Heart left ventricle (tissue), 16 donors: ENCODE measurements at regions of chr5 and their contacts with region 1.

Region 1: DNA sequence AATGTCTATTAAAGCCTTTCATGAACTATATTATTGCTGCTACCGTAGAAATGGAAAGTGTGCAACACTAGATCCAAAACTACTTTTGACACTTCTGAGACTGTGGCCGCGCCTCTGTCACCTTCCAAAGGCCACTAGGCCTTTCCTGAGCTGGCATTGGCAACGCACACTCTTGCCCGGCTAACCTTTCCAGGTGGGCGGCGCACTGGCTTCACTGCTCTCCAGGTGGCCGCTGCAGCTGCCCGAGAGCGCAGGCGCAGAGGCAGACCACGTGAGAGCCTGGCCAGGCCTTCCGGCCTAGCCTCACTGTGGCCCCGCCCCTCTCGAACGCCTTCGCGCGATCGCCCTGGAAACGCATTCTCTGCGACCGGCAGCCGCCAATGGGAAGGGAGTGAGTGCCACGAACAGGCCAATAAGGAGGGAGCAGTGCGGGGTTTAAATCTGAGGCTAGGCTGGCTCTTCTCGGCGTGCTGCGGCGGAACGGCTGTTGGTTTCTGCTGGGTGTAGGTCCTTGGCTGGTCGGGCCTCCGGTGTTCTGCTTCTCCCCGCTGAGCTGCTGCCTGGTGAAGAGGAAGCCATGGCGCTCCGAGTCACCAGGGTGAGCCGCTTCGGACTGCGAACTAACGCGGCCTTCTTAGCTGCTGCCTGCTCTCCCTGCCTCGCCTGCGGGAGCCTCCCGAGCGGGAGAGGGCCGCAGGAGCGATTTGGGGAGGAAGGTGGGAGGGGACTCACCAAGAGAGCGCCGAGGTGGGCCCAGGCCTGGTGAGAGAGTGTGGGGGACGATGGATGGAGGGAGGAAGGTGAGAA is at the start of gene CCNB1:
- DNase-seq: peak; percentile 97 to 99 (median 98)
- ATAC-seq: peak; percentile 100
- H3K4me3 ChIP-seq: peak within 1 kb of the TSS; percentile 58 to 87 (median 72)
- H3K27ac ChIP-seq: peak within 1 kb of the TSS in 8 of 12 donors; percentile 3 to 71 (median 48)
- H3K4me1 ChIP-seq: peaks cover 0 to 19% (median 11%) of the 10 kb centered on the region in 12 donors
- H3K27me3 ChIP-seq: no peaks in the 10 kb centered on the region
- CTCF ChIP-seq: peak in 3 of 12 donors; percentile 7 to 12 (median 8)
- POLR2A ChIP-seq: no peak
- total RNA-seq, gene CCNB1: 1.3 to 22.9 (median 3.8) TPM

Region 2: DNA sequence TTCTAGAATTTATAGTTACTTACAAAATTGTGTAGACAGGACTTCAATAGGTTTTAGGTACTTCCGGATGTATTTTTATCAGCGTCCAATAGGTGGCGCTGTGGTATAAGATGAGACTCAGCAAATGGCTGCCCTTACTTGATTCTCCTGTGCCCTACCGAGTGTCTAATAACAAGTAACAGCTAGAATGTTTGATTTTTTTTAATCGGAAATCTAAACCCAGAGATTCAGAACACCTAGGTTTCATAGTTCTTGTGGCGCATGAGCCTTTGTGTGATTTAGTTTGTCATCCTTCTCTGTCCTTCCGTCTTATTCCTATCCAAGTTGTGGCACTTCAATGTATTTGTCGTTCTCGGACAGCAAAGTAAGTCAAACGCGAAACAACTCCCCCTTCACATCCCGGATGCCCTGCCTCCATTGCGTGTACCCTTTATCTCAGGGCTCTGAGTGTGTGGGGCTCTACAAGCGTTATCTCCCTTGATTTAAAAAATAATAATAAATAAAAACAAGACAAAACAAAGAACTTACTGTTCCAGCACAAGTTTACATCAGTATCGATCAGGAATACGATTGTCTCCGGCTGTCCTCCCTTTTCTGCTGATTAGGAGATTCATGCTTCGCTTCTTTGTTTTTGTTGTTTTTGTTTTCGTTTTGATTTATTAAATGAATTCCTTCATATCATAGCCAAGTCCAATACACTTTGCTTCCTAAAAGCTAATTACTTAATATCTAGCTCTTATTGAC is 123.8 kb before region 1 on chr5:
- intact Hi-C with region 1: loop called in 2 of 10 experiments (anchors 5 to 10 kb)
- DNase-seq: peak in 4 of 5 donors; percentile 49 to 78 (median 66)
- ATAC-seq: peak; percentile 93 to 96 (median 95)
- H3K4me3 ChIP-seq: peak overlapping the region; percentile 24 to 67 (median 52)
- H3K27ac ChIP-seq: peak overlapping the region; percentile 51 to 84 (median 74)
- H3K4me1 ChIP-seq: peaks cover 0 to 6% (median 0%) of the 10 kb centered on the region in 12 donors
- H3K27me3 ChIP-seq: no peaks in the 10 kb centered on the region
- CTCF ChIP-seq: peak; percentile 81 to 96 (median 90)
- POLR2A ChIP-seq: no peak

Region 3: DNA sequence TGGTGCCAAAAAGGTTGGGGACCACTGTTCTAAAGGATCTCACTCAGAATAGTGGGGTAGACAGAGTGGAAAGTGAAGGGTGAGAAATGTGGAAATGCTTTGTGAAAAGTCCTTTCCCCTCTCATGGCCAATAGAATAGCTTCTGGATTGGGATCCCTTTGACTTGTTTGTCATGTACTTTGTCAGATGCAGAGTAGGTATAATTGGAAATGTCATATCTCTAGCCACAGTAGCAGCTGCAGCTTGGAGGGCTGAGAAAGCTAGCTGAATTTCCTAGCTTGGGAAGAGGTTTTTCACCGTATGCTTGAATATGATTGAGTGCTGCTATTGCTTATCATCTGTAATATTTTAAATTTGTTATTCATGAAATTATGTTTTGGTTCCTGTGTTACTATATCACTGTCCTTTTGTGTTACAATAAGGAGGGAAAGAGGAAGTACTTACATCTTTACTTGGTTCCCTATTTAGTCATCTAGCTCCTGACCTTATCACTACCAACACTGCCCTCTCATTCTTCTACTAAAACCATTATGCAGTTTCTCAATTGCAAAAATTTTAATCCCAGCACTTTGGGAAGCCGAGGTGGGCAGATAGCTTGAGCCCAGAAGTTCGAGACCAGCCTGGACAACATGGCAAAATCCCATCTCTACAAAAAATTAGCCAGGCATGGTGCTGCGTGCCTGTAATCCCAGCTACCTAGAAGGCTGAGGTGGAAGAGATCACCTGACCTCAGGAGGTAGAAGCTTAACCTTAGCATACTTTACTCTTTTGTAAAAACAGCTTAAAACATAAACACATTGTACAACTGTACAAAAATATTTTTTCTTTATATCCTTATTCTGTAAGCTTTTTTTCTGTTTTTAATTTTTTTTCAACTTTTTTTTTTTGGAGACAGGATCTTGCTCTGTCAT is 60.6 kb before region 1 on chr5:
- intact Hi-C with region 1: loop called in 1 of 10 experiments (anchors 10 kb)
- DNase-seq: no peak
- ATAC-seq: no peak
- H3K4me3 ChIP-seq: no peak overlapping the region
- H3K27ac ChIP-seq: no peak overlapping the region
- H3K4me1 ChIP-seq: no peaks in the 10 kb centered on the region
- H3K27me3 ChIP-seq: no peaks in the 10 kb centered on the region
- CTCF ChIP-seq: no peak
- POLR2A ChIP-seq: no peak

Region 4: DNA sequence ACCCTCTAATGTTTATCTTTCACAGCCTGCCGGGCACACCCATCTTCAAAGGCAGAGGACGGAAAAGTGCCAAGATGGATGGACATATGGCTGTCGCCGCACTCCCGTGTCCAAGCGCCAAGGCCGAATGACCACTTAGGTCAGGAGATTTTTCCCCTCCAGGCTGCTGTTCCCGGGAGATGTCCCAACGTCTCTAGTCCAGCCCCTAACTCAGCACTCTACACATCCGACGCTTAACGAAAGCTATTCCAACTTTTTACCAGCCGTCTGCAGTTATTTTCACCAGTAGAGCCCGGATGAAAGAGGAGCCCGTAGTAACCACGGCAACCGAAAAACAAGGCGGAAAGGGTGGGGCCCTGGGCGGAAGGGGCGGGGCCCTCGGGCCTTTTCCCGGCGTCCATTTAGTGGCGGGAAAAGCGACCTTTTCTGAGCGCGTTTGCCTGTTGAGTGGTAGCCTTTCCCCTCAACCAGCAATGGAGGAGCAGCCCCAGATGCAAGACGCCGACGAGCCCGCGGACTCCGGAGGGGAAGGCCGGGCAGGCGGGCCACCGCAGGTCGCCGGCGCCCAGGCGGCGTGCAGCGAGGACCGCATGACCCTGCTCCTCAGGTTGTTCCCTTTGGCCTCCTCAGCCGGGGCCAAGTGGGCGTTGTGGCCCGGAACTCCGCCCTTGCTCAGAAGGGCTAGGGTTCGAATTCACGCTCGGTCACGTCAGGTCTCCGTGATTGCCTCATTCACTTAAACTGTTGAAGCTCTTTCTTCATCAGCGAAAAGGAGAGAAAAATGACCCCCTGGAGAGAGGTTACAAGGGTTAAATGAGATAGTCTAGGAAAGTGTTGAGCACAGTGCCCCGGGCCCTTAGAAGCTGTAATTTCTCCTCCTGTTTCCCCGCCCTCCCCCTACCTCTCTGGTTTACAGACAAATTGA is 22.5 kb after region 1 on chr5 and contains the start of gene CENPH:
- intact Hi-C with region 1: loop called in 2 of 10 experiments (anchors 1 to 2 kb)
- DNase-seq: peak; percentile 87 to 91 (median 89)
- ATAC-seq: peak; percentile 97 to 100 (median 99)
- H3K4me3 ChIP-seq: peak within 1 kb of the TSS; percentile 58 to 95 (median 80)
- H3K27ac ChIP-seq: peak within 1 kb of the TSS in 11 of 12 donors; percentile 49 to 80 (median 68)
- H3K4me1 ChIP-seq: peaks cover 0 to 17% (median 10%) of the 10 kb centered on the region in 12 donors
- H3K27me3 ChIP-seq: no peaks in the 10 kb centered on the region
- CTCF ChIP-seq: no peak
- POLR2A ChIP-seq: peak in 1 of 2 donors; percentile 17
- total RNA-seq, gene CENPH: 1.1 to 6.9 (median 2.7) TPM

Region 5: GRCh38 chr5:69234457-69235268 is 67.8 kb after region 1 on chr5 and contains the start of gene CDK7:
- intact Hi-C with region 1: loop called in 2 of 10 experiments (anchors 5 kb)
- DNase-seq: peak; percentile 94 to 95 (median 95)
- ATAC-seq: peak; percentile 99 to 100 (median 100)
- H3K4me3 ChIP-seq: peak within 1 kb of the TSS; percentile 65 to 96 (median 88)
- H3K27ac ChIP-seq: peak within 1 kb of the TSS; percentile 35 to 91 (median 84)
- H3K4me1 ChIP-seq: peaks cover 3 to 27% (median 18%) of the 10 kb centered on the region in 12 donors
- H3K27me3 ChIP-seq: no peaks in the 10 kb centered on the region
- CTCF ChIP-seq: no peak
- POLR2A ChIP-seq: peak in 1 of 2 donors; percentile 65
- total RNA-seq, gene CDK7: 9.6 to 23.1 (median 14.5) TPM